AG04450 (cell line): ENCODE measurements at regions of chr21 and their contacts with region 1.

Region 1: GRCh38 chr21:36989699-36990507 is 16.6 kb upstream of the RIPPLY3 start:
- DNase-seq: peak; percentile 62
- H3K4me3 ChIP-seq: peak overlapping the region; percentile 63
- H3K27ac ChIP-seq: peak overlapping the region; percentile 52
- H3K27me3 ChIP-seq: no peaks in the 10 kb centered on the region
- CTCF ChIP-seq: peak; percentile 52

Region 2: GRCh38 chr21:36419996-36420395 is 569.9 kb before region 1 on chr21:
- CTCF ChIA-PET with region 1: interaction called, 10 read pairs
- POLR2A ChIA-PET with region 1: no interaction called
- DNase-seq: peak; percentile 84
- H3K4me3 ChIP-seq: no peak overlapping the region
- H3K27ac ChIP-seq: no peak overlapping the region
- H3K27me3 ChIP-seq: no peaks in the 10 kb centered on the region
- CTCF ChIP-seq: peak; percentile 85

Region 3: GRCh38 chr21:36976882-36977651 is 12.8 kb before region 1 on chr21:
- CTCF ChIA-PET with region 1: interaction called, 14 read pairs
- POLR2A ChIA-PET with region 1: no interaction called
- DNase-seq: peak; percentile 27
- H3K4me3 ChIP-seq: no peak overlapping the region
- H3K27ac ChIP-seq: no peak overlapping the region
- H3K27me3 ChIP-seq: no peaks in the 10 kb centered on the region
- CTCF ChIP-seq: peak; percentile 70

Region 4: GRCh38 chr21:37009740-37010341 is 19.9 kb after region 1 on chr21:
- CTCF ChIA-PET with region 1: interaction called, 14 read pairs
- POLR2A ChIA-PET with region 1: no interaction called
- DNase-seq: peak; percentile 49
- H3K4me3 ChIP-seq: peak overlapping the region; percentile 48
- H3K27ac ChIP-seq: no peak overlapping the region
- H3K27me3 ChIP-seq: peaks cover 33% of the 10 kb centered on the region
- CTCF ChIP-seq: peak; percentile 88